CD8-positive, alpha-beta T cell (primary cell): ENCODE measurements at regions of chr6 and their contacts with region 1.

Region 1: GRCh38 chr6:118580585-118581419 is 32.7 kb downstream of the PLN start:
- DNase-seq: peak in 4 of 9 experiments; percentile 21 to 73 (median 42)
- ATAC-seq: peak; percentile 66
- H3K4me3 ChIP-seq: no peak overlapping the region
- H3K4me3 Mint-ChIP-seq: no peak overlapping the region
- H3K27ac ChIP-seq: no peak overlapping the region
- H3K27ac Mint-ChIP-seq: peak overlapping the region; percentile 86
- H3K4me1 ChIP-seq: no peaks in the 10 kb centered on the region
- H3K4me1 Mint-ChIP-seq: peaks cover 18% of the 10 kb centered on the region
- H3K27me3 ChIP-seq: no peaks in the 10 kb centered on the region
- H3K27me3 Mint-ChIP-seq: no peaks in the 10 kb centered on the region
- CTCF ChIP-seq: peak; percentile 60

Region 2: GRCh38 chr6:117976030-117976651 is 604.7 kb before region 1 on chr6:
- CTCF ChIA-PET with region 1: no interaction called
- POLR2A ChIA-PET with region 1: no interaction called
- intact Hi-C with region 1: loop called in 1 of 2 experiments (anchors 10 kb)
- DNase-seq: peak in 2 of 9 experiments; percentile 38 to 55
- ATAC-seq: no peak
- H3K4me3 ChIP-seq: no peak overlapping the region
- H3K4me3 Mint-ChIP-seq: no peak overlapping the region
- H3K27ac ChIP-seq: no peak overlapping the region
- H3K27ac Mint-ChIP-seq: no peak overlapping the region
- H3K4me1 ChIP-seq: no peaks in the 10 kb centered on the region
- H3K4me1 Mint-ChIP-seq: no peaks in the 10 kb centered on the region
- H3K27me3 ChIP-seq: no peaks in the 10 kb centered on the region
- H3K27me3 Mint-ChIP-seq: peaks cover 19% of the 10 kb centered on the region
- CTCF ChIP-seq: peak; percentile 56

Region 3: DNA sequence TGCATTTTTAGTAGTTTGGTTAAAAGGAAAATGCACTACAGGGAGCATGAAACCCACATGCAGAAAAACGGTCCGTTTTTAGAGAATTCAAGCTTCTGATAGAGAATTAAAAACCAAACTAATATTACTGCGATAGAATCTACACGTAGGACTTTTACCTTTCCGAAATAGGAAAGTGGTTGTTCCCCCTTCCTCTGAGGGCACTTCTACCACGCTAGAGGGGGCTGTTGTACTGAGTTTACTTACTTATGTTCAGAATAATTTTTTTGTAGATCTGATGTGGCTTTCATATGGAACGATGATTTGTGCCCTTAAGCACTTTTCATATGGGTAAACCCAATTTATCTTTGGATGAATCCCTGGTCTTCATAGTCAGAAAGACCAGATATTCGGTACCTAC is 297.0 kb before region 1 on chr6:
- CTCF ChIA-PET with region 1: interaction called, 7 read pairs
- POLR2A ChIA-PET with region 1: no interaction called
- intact Hi-C with region 1: loop called (anchors 1 kb)
- DNase-seq: peak in 8 of 9 experiments; percentile 14 to 74 (median 52)
- ATAC-seq: peak; percentile 61
- H3K4me3 ChIP-seq: no peak overlapping the region
- H3K4me3 Mint-ChIP-seq: no peak overlapping the region
- H3K27ac ChIP-seq: no peak overlapping the region
- H3K27ac Mint-ChIP-seq: no peak overlapping the region
- H3K4me1 ChIP-seq: no peaks in the 10 kb centered on the region
- H3K4me1 Mint-ChIP-seq: peaks cover 2% of the 10 kb centered on the region
- H3K27me3 ChIP-seq: no peaks in the 10 kb centered on the region
- H3K27me3 Mint-ChIP-seq: peaks cover 11% of the 10 kb centered on the region
- CTCF ChIP-seq: peak; percentile 61

Region 4: GRCh38 chr6:118542184-118542952 is 38.4 kb before region 1 on chr6:
- CTCF ChIA-PET with region 1: no interaction called
- POLR2A ChIA-PET with region 1: no interaction called
- intact Hi-C with region 1: no loop called
- DNase-seq: no peak
- ATAC-seq: no peak
- H3K4me3 ChIP-seq: no peak overlapping the region
- H3K4me3 Mint-ChIP-seq: no peak overlapping the region
- H3K27ac ChIP-seq: no peak overlapping the region
- H3K27ac Mint-ChIP-seq: no peak overlapping the region
- H3K4me1 ChIP-seq: no peaks in the 10 kb centered on the region
- H3K4me1 Mint-ChIP-seq: peaks cover 63% of the 10 kb centered on the region
- H3K27me3 ChIP-seq: no peaks in the 10 kb centered on the region
- H3K27me3 Mint-ChIP-seq: no peaks in the 10 kb centered on the region
- CTCF ChIP-seq: no peak

Region 5: GRCh38 chr6:118596774-118597320 is 16.0 kb after region 1 on chr6:
- CTCF ChIA-PET with region 1: no interaction called
- POLR2A ChIA-PET with region 1: interaction called, 6 read pairs
- intact Hi-C with region 1: loop called in 1 of 2 experiments (anchors 2 kb)
- DNase-seq: no peak
- ATAC-seq: no peak
- H3K4me3 ChIP-seq: no peak overlapping the region
- H3K4me3 Mint-ChIP-seq: no peak overlapping the region
- H3K27ac ChIP-seq: no peak overlapping the region
- H3K27ac Mint-ChIP-seq: no peak overlapping the region
- H3K4me1 ChIP-seq: no peaks in the 10 kb centered on the region
- H3K4me1 Mint-ChIP-seq: peaks cover 40% of the 10 kb centered on the region
- H3K27me3 ChIP-seq: no peaks in the 10 kb centered on the region
- H3K27me3 Mint-ChIP-seq: no peaks in the 10 kb centered on the region
- CTCF ChIP-seq: no peak

Region 6: GRCh38 chr6:119052292-119052889 is 471.6 kb after region 1 on chr6:
- CTCF ChIA-PET with region 1: no interaction called
- POLR2A ChIA-PET with region 1: no interaction called
- intact Hi-C with region 1: no loop called
- DNase-seq: peak in 2 of 9 experiments; percentile 7 to 9
- ATAC-seq: peak; percentile 26
- H3K4me3 ChIP-seq: no peak overlapping the region
- H3K4me3 Mint-ChIP-seq: no peak overlapping the region
- H3K27ac ChIP-seq: no peak overlapping the region
- H3K27ac Mint-ChIP-seq: peak overlapping the region; percentile 60
- H3K4me1 ChIP-seq: no peaks in the 10 kb centered on the region
- H3K4me1 Mint-ChIP-seq: peaks cover 9% of the 10 kb centered on the region
- H3K27me3 ChIP-seq: no peaks in the 10 kb centered on the region
- H3K27me3 Mint-ChIP-seq: no peaks in the 10 kb centered on the region
- CTCF ChIP-seq: no peak